ENCODE measurements at regions of chr19 and their contacts with region 1.

Region 1: DNA sequence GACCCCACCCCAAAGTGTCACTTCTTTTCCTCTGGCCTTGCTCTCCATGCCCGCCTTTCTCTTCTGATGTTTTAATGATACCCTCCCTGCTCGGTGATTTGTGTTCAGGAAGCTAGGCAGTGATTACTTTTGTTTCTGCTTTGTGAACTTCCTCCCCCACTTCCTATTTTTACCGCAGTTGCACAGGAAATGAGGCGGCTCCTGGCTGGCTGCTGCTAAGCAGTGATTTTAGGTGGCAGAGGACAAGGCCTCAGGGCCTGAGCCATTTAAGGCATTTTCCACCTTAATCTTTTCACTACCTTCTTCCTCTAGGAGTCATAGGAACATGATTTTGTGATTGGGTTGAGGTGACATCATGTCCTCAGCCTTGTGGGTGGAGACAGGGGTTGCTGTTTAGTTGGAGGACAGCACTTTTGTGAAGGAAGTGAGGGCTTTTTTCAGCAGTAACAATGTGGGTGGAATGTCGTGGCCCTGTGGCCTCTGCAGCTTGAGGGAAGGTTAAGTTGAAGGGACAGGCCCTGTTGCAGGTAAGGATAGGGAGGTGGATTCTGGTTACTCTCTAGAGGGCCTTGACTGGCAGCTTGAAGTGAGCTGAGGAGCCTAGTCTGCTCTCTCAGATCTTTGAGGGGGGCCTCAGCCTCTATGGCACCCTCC is 15.7 kb downstream of the GARRE1 start:
- DNase-seq: peak; percentile 86
- H3K4me3 Mint-ChIP-seq: peak overlapping the region; percentile 68
- H3K27ac Mint-ChIP-seq: peak overlapping the region; percentile 92
- H3K4me1 Mint-ChIP-seq: peaks cover 71% of the 10 kb centered on the region
- H3K27me3 Mint-ChIP-seq: no peaks in the 10 kb centered on the region

Region 2: DNA sequence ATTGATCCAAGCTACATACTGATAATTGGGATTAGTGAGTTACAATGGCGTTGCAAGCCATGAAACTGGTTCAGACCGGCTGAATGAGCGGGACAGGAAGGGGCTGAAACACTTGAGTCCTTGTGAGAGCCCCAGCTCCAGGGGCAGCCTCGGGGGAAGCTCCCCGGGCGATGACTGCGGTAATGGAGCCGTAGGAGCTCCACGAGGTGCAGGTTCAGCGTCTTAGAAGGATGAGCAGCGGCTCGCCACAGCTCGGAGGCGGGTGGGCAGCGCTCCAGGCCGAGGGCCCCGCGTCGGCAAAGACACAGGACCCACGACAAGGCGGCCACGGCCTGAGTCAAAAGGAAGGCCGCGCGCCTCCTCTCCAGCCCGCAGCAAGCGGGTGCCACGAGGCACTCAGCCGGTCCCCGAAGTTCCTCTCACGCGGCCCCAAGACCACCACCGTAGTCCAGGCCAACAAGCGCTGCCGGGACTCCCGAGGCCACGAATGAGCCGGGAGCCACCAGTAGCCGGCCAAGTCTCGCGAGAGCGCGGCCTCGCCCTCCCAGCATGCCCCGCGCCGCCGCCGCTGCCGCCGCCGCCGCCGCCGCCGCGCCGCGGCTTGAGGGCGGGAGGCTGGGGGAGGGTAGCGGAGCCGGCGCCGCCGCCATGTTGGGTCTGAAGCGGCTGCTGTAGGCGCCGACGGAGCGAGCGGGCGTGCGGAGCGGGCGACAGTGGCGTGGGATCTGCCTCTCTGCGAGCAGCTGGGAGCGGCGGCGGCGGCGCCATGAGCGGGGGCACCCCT is 98.0 kb before region 1 on chr19 and contains the start of gene LSM14A:
- CTCF ChIA-PET with region 1: no interaction called
- intact Hi-C with region 1: loop called (anchors 1 kb)
- DNase-seq: peak; percentile 90
- H3K4me3 Mint-ChIP-seq: peak within 1 kb of the TSS; percentile 96
- H3K27ac Mint-ChIP-seq: peak within 1 kb of the TSS; percentile 99
- H3K4me1 Mint-ChIP-seq: peaks cover 38% of the 10 kb centered on the region
- H3K27me3 Mint-ChIP-seq: no peaks in the 10 kb centered on the region
- total RNA-seq, gene LSM14A: 87.9 to 102 TPM

Region 3: DNA sequence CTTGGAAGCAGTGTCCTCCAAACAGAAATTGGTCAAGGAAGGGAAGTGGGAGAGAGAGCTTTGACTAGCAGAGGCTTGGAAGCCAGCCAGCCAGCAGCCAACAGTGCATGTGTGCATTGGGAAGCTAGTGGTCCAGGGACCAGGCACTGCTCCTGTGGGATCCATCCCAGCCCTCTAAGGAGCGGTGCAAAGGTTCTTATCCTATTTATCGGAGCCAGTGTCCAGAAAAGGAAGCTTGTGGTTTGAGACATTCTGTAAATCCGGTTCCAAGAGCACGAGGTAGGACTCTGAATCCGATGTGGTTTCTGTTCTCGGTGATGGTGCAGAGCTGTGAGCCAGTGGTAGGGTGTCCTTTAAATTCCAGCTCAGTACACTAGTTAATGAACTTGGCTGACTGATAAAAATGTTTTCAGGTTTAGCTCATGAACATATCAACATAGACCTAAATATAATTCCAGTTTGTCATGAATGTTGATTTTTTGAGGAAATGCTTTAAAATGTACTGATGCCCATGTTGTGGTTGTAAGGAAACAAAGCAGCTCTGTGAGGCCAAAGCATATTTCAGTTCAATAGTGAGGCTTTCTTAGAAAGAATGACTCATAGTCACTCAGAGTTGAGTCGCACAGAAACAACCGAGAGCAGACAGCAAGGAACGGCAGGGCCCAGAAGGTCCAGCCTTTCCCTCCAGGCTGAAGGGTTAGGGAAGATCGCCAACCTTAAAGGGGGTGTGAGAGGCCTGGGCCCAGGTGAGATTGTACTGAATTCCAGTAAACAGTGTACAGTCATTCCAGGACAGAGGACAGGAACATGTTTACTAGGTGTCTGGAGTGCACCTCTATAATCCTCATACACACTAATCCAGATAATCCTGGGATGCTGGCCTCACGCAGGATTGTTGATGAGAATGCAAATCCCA is 37.3 kb before region 1 on chr19:
- CTCF ChIA-PET with region 1: interaction called, 3 read pairs
- intact Hi-C with region 1: loop called (anchors 1 kb)
- DNase-seq: peak; percentile 50
- H3K4me3 Mint-ChIP-seq: no peak overlapping the region
- H3K27ac Mint-ChIP-seq: peak overlapping the region; percentile 75
- H3K4me1 Mint-ChIP-seq: peaks cover 21% of the 10 kb centered on the region
- H3K27me3 Mint-ChIP-seq: no peaks in the 10 kb centered on the region

Region 4: GRCh38 chr19:34308381-34309367 is 38.6 kb after region 1 on chr19:
- CTCF ChIA-PET with region 1: no interaction called
- intact Hi-C with region 1: loop called (anchors 1 kb)
- DNase-seq: peak; percentile 61
- H3K4me3 Mint-ChIP-seq: peak overlapping the region; percentile 25
- H3K27ac Mint-ChIP-seq: peak overlapping the region; percentile 83
- H3K4me1 Mint-ChIP-seq: peaks cover 56% of the 10 kb centered on the region
- H3K27me3 Mint-ChIP-seq: no peaks in the 10 kb centered on the region

Region 5: GRCh38 chr19:34345947-34346351 is 75.9 kb after region 1 on chr19:
- CTCF ChIA-PET with region 1: interaction called, 14 read pairs
- intact Hi-C with region 1: loop called (anchors 1 kb)
- DNase-seq: peak; percentile 82
- H3K4me3 Mint-ChIP-seq: no peak overlapping the region
- H3K27ac Mint-ChIP-seq: no peak overlapping the region
- H3K4me1 Mint-ChIP-seq: peaks cover 17% of the 10 kb centered on the region
- H3K27me3 Mint-ChIP-seq: no peaks in the 10 kb centered on the region

Region 6: DNA sequence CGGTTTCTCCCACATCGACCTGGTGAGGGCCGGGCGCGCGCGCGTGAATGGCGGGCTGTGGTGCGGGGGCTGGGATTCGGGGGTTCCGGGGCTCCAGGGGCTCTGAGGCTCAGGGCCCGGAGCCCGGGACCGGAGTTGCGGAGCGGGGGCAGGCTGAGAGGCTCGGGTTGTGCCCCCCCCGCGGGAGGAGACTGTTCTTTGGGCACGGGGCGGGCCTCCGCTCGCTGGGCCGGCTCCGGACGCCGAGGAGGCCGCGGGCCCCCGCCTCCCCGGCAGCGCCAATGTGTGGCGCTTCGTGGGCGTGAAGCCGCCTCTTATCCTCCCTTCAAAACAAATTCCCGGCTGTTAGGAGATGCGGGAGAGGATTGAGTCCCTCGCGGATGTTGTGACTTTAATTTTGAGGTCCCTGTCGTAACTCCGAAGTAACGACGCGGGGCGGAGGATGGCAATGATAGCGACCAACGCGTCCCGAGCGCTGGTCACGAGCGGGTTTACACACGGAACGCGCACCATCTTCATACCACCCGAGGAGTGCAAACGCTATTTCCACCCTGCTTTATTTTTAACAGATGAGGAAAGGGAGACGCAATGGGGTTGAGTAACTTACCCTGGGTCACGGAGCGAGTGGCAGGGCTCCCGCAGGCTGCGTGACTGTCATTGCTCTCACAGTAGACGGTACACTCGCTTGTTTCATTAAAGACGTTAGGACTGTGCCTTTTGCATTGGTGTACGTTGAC is 158.6 kb after region 1 on chr19:
- CTCF ChIA-PET with region 1: no interaction called
- intact Hi-C with region 1: loop called (anchors 1 kb)
- DNase-seq: peak; percentile 56
- H3K4me3 Mint-ChIP-seq: peak overlapping the region; percentile 97
- H3K27ac Mint-ChIP-seq: peak overlapping the region; percentile 94
- H3K4me1 Mint-ChIP-seq: peaks cover 35% of the 10 kb centered on the region
- H3K27me3 Mint-ChIP-seq: no peaks in the 10 kb centered on the region

Region 7: GRCh38 chr19:34448191-34448590 is 178.1 kb after region 1 on chr19:
- CTCF ChIA-PET with region 1: no interaction called
- intact Hi-C with region 1: no loop called
- DNase-seq: no peak
- H3K4me3 Mint-ChIP-seq: no peak overlapping the region
- H3K27ac Mint-ChIP-seq: peak overlapping the region; percentile 33
- H3K4me1 Mint-ChIP-seq: peaks cover 1% of the 10 kb centered on the region
- H3K27me3 Mint-ChIP-seq: no peaks in the 10 kb centered on the region

Measured in activated naive CD4-positive, alpha-beta T cell treated with anti-CD3 and anti-CD28 coated beads for 36 hours (primary cell).